ENCODE measurements at regions of chr5 and their contacts with region 1.

Region 1: DNA sequence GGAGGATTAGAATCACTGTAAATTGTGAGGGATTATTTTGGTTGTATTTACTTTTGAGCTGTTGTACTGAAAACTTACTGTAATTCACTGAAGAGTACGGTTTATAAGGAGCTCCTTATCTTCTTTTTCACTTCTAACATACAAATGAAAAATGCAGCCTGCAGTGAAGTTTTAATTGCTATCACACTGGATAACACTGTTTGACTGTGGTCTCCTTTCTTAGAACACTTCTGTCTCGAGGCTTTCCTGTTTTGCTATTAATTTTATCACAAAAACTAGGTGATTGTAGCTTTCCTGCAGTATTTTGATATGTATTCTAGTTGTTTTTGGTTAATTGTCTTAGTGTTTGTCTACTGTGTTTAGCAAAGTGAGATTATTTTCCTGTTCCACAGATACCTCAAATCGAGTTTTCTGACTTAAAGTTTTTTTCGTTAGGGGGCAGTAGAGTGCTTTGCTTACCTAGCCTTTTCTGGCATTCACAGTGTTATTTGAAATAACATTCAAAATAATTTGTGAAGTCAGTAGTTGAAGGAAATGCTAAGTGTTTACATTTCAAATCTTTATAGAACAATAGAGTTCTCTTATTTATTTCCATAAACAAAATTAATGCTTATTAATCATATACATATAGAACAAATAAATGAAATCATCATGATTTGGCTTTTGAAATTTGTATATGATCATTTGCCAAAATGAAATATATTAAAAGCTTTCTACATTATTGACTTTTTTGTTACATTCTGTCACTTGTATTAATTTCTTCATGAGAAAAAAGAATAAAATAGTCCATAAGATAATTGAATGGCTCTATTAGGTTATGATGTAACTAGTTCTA is 52.9 kb downstream of the COMMD10 start:
- DNase-seq: peak; percentile 15 to 60 (median 25)
- ATAC-seq: peak; percentile 75
- H3K4me3 ChIP-seq: no peak overlapping the region
- H3K27ac ChIP-seq: no peak overlapping the region
- H3K4me1 ChIP-seq: no peaks in the 10 kb centered on the region
- H3K27me3 ChIP-seq: no peaks in the 10 kb centered on the region
- CTCF ChIP-seq: peak; percentile 49 to 72 (median 60); a peak in 5 of 6 replicates
- EP300 ChIP-seq: no peak
- POLR2A ChIP-seq: no peak
- RAD21 ChIP-seq: peak; percentile 83

Region 2: DNA sequence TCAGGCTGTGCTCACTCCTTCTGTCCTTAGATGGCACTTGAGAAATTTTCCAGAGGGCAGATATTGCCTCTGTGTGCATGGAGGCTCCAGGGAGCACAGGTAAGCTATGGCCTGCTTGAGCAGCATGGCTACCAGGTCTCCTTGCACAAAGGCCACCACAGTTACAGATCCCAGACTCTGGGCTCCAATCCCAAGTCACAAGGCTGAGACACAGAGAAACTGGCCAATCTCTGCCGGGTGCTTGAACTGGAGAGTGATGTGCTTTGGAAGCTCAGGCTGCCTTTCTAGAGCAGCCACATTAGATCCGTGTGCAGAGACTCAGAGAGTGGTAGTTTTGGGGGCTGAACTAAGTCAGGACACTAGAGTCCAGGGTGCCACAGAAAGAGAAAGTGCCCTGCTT is 291.2 kb after region 1 on chr5:
- CTCF ChIA-PET with region 1: no interaction called
- POLR2A ChIA-PET with region 1: no interaction called
- in situ Hi-C with region 1: no loop called
- intact Hi-C with region 1: loop called (anchors 5 kb)
- DNase-seq: no peak
- ATAC-seq: no peak
- H3K4me3 ChIP-seq: no peak overlapping the region
- H3K27ac ChIP-seq: no peak overlapping the region
- H3K4me1 ChIP-seq: no peaks in the 10 kb centered on the region
- H3K27me3 ChIP-seq: no peaks in the 10 kb centered on the region; a peak in 1 of 5 replicates
- CTCF ChIP-seq: no peak
- EP300 ChIP-seq: no peak
- POLR2A ChIP-seq: no peak
- RAD21 ChIP-seq: no peak

Region 3: DNA sequence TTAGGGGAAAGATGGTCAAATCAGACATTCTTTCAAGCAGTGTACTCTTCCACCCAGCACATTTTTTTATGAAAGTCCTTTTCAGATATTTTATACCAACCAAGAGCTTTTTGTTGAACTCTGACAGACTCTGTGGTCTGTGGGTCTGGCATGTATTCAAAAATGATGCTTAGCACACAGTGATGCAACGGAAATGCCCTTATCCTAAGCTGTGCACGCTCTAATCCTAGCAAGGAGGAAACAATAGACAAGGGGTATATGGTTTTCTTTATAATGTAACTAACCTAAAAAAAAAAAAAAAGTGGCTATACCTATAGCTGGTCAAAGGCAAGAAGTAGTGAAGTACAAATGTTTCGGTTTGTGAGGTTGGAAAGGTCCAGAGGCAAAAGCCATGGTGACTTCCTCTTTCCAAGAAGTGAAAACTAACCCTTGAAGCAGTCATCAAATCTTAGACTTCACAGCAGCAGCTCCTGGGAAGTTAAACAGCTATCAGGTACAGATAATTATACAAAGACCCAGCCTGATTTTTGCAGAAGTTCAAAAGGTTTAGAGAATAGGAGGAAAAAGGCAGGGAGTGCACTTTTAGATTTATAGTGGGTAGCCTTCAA is 354.4 kb after region 1 on chr5:
- CTCF ChIA-PET with region 1: no interaction called
- POLR2A ChIA-PET with region 1: no interaction called
- in situ Hi-C with region 1: no loop called
- intact Hi-C with region 1: loop called (anchors 10 kb)
- DNase-seq: no peak
- ATAC-seq: no peak
- H3K4me3 ChIP-seq: no peak overlapping the region
- H3K27ac ChIP-seq: no peak overlapping the region
- H3K4me1 ChIP-seq: no peaks in the 10 kb centered on the region; a peak in 2 of 5 replicates
- H3K27me3 ChIP-seq: no peaks in the 10 kb centered on the region
- CTCF ChIP-seq: no peak
- EP300 ChIP-seq: no peak
- POLR2A ChIP-seq: no peak
- RAD21 ChIP-seq: no peak

Region 4: DNA sequence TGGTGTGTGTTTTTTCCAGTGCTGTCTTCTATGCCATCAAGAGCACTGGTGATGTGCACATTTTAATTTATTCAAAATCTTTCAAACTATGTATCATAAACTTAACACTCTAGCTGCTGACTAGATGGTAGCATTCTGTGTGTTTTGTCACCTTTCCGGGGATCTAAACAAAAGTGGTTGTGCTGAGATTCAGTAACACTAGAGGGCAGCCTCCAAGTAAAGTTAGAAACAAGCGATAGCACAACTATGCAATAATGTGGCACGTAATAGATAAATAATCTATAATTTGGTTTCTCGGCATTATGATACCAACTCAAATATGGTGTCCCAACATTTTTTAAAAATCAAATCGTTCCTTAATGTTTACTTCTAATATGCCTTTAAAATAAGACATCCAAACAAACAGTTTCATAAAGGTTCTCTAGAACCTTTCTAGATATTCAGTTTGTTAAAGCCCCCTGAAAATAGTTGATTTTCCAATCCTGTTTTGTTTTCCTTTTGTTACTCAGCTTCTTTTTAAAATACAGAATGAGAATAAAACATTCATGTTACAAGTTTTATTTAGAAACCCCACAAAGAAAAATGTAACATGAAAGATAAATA is 420.0 kb after region 1 on chr5:
- CTCF ChIA-PET with region 1: no interaction called
- POLR2A ChIA-PET with region 1: no interaction called
- in situ Hi-C with region 1: no loop called
- intact Hi-C with region 1: loop called (anchors 10 kb)
- DNase-seq: peak in 2 of 4 experiments; percentile 22 to 28
- ATAC-seq: peak; percentile 75
- H3K4me3 ChIP-seq: no peak overlapping the region
- H3K27ac ChIP-seq: no peak overlapping the region
- H3K4me1 ChIP-seq: no peaks in the 10 kb centered on the region
- H3K27me3 ChIP-seq: peaks cover 0 to 4% of the 10 kb centered on the region in 2 experiments; a peak in 1 of 5 replicates
- CTCF ChIP-seq: peak; percentile 29 to 50 (median 48); a peak in 5 of 6 replicates
- EP300 ChIP-seq: no peak
- POLR2A ChIP-seq: no peak
- RAD21 ChIP-seq: peak in 1 of 2 experiments; percentile 58; a peak in 3 of 4 replicates

Region 5: DNA sequence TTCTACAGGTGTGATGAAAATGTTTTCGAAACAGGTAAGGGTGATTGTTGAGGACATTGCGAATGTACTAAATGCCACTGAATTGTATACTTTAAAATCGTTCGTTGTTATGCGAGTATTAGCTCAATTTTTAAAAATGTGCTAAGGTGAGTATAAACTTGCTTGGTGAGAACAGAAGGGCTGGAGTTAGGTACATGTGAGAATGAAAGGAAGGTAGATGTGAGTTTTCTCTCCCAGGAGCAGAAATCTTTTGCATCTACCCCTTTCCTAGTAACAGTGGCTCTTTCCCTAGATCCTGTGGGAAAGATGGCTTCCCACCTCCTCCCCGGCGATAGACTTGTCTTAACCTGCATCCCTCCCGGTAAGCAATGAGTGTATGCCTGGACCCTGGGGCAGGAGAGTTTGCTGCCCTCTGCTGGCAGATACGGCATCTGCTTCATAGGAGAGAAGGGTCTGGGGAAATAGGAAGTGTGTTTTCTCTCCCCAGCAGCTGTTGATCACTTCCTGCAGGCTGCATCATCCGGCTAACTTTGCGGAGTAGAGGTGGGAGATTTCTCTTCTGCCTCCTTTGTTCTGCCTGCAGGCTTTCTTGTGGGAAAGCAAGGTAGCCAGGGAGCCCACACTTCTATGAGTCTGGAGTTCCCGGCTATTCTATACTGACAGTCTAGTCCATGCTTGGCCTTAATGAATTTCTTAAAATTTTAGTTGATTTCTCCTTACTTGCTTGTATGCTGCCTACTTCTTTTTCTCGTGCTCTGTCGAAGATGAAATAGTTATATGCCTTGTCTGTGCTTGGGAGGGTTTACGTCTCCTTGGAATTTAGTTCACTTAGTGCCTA is 810.1 kb after region 1 on chr5:
- CTCF ChIA-PET with region 1: no interaction called
- POLR2A ChIA-PET with region 1: no interaction called
- in situ Hi-C with region 1: loop called (anchors 25 kb)
- intact Hi-C with region 1: loop called (anchors 1 kb)
- DNase-seq: peak; percentile 37 to 59 (median 54)
- ATAC-seq: peak; percentile 94
- H3K4me3 ChIP-seq: no peak overlapping the region
- H3K27ac ChIP-seq: no peak overlapping the region
- H3K4me1 ChIP-seq: no peaks in the 10 kb centered on the region
- H3K27me3 ChIP-seq: no peaks in the 10 kb centered on the region
- CTCF ChIP-seq: peak; percentile 49 to 70 (median 54)
- EP300 ChIP-seq: no peak
- POLR2A ChIP-seq: no peak
- RAD21 ChIP-seq: peak; percentile 19 to 58; a peak in 3 of 4 replicates